ENCODE measurements at regions of chr1 and their contacts with region 1.

Region 1: DNA sequence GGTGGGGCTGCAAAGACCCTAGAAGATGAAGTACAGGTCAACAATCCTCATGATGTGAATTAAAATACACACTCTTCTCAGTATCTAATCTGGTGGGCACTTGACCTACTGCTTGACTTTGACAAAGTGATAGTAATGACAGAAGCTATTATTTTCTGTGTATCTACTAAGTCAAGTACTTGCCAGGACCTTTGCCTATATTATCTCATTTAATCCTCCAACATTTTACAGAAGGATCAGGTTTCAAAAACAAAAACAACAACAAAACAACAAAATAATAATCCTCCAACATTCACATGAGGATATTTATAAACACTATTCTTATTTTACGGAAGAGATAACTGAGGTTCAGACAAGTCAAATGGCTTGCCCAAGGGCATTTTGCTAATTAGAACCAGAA is 4.4 kb upstream of the CD48 start:
- DNase-seq: no peak
- ATAC-seq: no peak
- H3K4me3 ChIP-seq: no peak overlapping the region
- H3K27ac ChIP-seq: no peak overlapping the region
- H3K4me1 ChIP-seq: no peaks in the 10 kb centered on the region; the same call in 2 of the 3 replicates
- CTCF ChIP-seq: no peak
- EP300 ChIP-seq: no peak
- POLR2A ChIP-seq: no peak
- RAD21 ChIP-seq: no peak

Region 2: DNA sequence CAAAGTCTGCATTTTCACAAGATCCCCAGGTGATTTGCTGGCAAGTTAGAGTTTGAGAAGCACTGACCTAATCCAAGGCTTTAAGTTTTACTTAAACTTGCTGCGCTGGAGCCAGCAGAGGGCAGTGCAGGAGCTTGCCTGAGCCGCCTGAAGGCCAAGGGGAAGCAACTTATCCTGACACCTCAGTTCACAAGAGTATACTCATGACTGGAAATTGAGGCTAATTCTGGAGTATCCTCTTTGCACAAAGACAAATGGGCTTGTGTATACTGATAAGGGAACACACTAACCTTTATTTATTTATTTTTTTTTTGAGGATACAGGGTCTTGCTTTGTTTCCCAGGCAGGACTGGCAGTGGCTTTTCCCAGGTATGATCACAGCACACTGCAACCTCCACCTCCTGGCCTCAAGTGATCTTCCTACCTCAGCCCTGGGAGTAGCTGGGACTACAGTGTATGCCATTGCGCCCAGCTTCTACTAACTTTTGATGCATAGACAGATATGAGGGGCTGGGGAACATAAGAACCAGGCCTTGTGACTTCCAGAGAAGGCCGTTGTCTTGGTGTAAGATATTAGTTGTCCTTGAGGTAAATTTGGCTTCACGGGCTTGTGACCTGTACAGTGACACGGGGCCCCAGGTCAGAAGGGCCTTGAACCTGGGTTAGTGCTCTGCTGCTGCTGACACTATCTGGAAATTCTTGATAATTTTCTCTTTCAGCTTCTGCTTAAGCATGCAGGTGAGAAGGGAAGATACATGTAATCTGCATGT is 40.2 kb before region 1 on chr1:
- CTCF ChIA-PET with region 1: interaction called, 14 read pairs
- POLR2A ChIA-PET with region 1: no interaction called
- DNase-seq: peak; percentile 45 to 77
- ATAC-seq: peak; percentile 92 to 97
- H3K4me3 ChIP-seq: no peak overlapping the region
- H3K27ac ChIP-seq: no peak overlapping the region
- H3K4me1 ChIP-seq: no peaks in the 10 kb centered on the region
- CTCF ChIP-seq: peak; percentile 80
- EP300 ChIP-seq: no peak
- POLR2A ChIP-seq: no peak
- RAD21 ChIP-seq: peak; percentile 73 to 78

Region 3: GRCh38 chr1:160773093-160773492 is 57.1 kb after region 1 on chr1:
- CTCF ChIA-PET with region 1: no interaction called
- POLR2A ChIA-PET with region 1: no interaction called
- DNase-seq: no peak
- ATAC-seq: no peak
- H3K4me3 ChIP-seq: no peak overlapping the region
- H3K27ac ChIP-seq: no peak overlapping the region
- H3K4me1 ChIP-seq: no peaks in the 10 kb centered on the region
- CTCF ChIP-seq: no peak
- EP300 ChIP-seq: no peak
- POLR2A ChIP-seq: no peak
- RAD21 ChIP-seq: no peak